CD4-positive, alpha-beta memory T cell (primary cell): ENCODE measurements at regions of chr2 and their contacts with region 1.

Region 1: DNA sequence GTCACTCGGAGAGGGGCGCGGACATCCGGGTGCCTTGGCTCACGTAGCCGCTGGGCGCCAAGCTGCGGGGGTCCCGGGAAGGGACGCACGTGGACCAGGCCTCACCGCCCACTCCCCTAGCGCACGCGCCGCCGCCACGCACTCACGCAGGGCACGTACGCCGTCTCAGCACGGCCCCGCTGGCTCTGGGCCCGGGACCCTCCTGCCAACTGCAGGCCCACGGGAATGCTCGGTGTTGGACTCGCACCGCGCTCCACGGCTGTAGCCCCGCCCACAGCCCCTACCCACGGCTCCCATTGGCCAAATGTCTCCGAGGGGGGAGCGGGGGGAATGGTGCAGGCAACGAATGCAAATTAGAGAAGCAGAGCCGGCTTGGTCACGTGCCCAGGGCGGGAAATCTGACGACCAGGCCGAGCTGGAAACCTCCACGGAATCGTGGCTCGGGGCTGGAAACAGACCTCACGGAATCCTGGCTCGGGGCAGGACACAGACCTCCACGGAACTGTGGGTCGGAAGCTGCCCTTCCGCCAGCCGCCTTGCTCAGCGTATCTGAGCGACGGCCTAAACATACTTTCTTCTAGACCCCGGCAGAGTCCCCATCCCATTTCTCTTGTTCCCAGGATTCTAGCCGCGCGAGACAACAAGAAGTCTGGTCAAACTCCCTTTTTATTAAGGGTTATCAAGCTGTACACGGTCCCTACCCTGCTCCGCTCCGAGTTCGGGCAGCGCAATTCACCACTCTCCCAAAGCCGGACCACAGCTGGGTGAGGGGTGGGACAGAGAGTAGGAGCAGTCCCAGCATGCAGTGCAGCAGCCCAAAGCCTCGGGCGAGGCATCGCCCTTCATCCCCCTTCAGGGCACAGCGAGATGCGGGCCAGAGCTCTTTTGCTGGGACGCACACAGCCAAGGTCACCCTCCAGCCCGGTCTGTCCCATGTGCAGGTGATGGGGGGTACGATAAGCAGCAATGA is at the start of gene ABCB6:
- DNase-seq: peak; percentile 81 to 93 (median 83)
- H3K4me3 ChIP-seq: peak within 1 kb of the TSS; percentile 49 to 68
- H3K4me3 Mint-ChIP-seq: peak within 1 kb of the TSS; percentile 82 to 93 (median 84)
- H3K27ac ChIP-seq: peak within 1 kb of the TSS; percentile 53
- H3K27ac Mint-ChIP-seq: peak within 1 kb of the TSS; percentile 74 to 96 (median 88)
- H3K4me1 ChIP-seq: peaks cover 24% of the 10 kb centered on the region
- H3K4me1 Mint-ChIP-seq: peaks cover 8 to 25% (median 19%) of the 10 kb centered on the region in 4 donors
- H3K27me3 ChIP-seq: no peaks in the 10 kb centered on the region
- H3K27me3 Mint-ChIP-seq: no peaks in the 10 kb centered on the region
- total RNA-seq, gene ABCB6: 10.7 to 11.1 TPM

Region 2: GRCh38 chr2:219171231-219171651 is 47.8 kb before region 1 on chr2:
- CTCF ChIA-PET with region 1: interaction called, 253 read pairs
- POLR2A ChIA-PET with region 1: interaction called, 424 read pairs
- intact Hi-C with region 1: loop called (anchors 2 kb)
- DNase-seq: peak; percentile 39 to 58 (median 49)
- H3K4me3 ChIP-seq: no peak overlapping the region
- H3K4me3 Mint-ChIP-seq: peak overlapping the region in 1 of 8 donors; percentile 25
- H3K27ac ChIP-seq: no peak overlapping the region
- H3K27ac Mint-ChIP-seq: peak overlapping the region; percentile 35 to 91 (median 75)
- H3K4me1 ChIP-seq: peaks cover 31% of the 10 kb centered on the region
- H3K4me1 Mint-ChIP-seq: peaks cover 15 to 46% (median 31%) of the 10 kb centered on the region in 4 donors
- H3K27me3 ChIP-seq: no peaks in the 10 kb centered on the region
- H3K27me3 Mint-ChIP-seq: no peaks in the 10 kb centered on the region

Region 3: GRCh38 chr2:219253753-219254590 is 35.0 kb after region 1 on chr2 and contains the start of gene TUBA4A:
- CTCF ChIA-PET with region 1: interaction called, 11 read pairs
- POLR2A ChIA-PET with region 1: interaction called, 684 read pairs
- intact Hi-C with region 1: loop called (anchors 1 kb)
- DNase-seq: peak; percentile 89 to 90 (median 90)
- H3K4me3 ChIP-seq: peak within 1 kb of the TSS; percentile 94 to 100
- H3K4me3 Mint-ChIP-seq: peak within 1 kb of the TSS; percentile 85 to 99 (median 94)
- H3K27ac ChIP-seq: peak within 1 kb of the TSS; percentile 87
- H3K27ac Mint-ChIP-seq: peak within 1 kb of the TSS; percentile 92 to 98 (median 97)
- H3K4me1 ChIP-seq: peaks cover 42% of the 10 kb centered on the region
- H3K4me1 Mint-ChIP-seq: peaks cover 34 to 60% (median 45%) of the 10 kb centered on the region in 4 donors
- H3K27me3 ChIP-seq: no peaks in the 10 kb centered on the region
- H3K27me3 Mint-ChIP-seq: no peaks in the 10 kb centered on the region
- total RNA-seq, gene TUBA4A: 242 to 259 TPM

Region 4: DNA sequence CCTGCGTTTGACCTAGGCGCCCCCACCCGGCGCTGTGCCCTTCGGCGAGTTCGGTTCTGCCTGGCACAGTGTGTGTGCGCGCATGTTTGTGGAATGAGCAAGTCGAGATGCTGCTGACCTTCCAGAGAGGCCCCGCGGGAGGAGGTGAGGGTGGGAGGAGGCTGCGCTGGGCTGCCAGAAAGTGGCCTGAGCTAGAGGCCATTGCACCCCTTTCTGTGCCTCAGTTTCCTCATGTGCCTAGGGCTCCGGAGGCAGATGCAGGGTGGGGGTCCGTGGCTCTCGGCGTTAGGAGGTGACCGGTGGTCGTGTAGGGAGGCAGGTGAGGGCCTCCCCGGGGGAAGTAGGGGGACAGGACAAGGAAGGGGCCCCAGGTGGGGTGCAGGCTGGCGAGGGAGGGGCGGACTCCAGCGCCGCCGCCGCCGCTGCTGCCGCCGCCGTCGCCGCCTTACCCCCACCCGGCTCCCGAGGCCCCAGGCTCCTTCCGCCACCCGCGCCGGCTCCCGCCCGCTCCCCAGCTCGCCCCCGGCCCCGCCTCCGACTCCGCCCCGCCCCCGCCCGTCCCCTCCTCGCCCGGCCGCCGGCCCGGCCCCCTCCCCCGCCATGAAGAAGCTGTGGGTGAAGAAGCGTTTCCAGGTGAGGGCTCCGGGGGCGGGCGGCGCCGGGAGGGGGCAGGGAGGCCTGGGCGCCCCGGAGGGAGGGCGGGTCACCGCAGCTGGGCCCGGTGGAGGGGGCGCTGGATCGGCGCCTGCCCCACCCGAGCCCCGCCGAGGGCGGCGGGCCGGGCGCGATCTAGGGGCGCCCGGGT is 222.6 kb after region 1 on chr2:
- CTCF ChIA-PET with region 1: no interaction called
- POLR2A ChIA-PET with region 1: no interaction called
- intact Hi-C with region 1: no loop called
- DNase-seq: peak; percentile 41 to 57 (median 44)
- H3K4me3 ChIP-seq: peak overlapping the region in 1 of 2 donors; percentile 47
- H3K4me3 Mint-ChIP-seq: peak overlapping the region; percentile 70 to 89 (median 78)
- H3K27ac ChIP-seq: no peak overlapping the region
- H3K27ac Mint-ChIP-seq: peak overlapping the region in 2 of 7 donors; percentile 17 to 75
- H3K4me1 ChIP-seq: peaks cover 7% of the 10 kb centered on the region
- H3K4me1 Mint-ChIP-seq: peaks cover 6 to 18% (median 14%) of the 10 kb centered on the region in 4 donors
- H3K27me3 ChIP-seq: no peaks in the 10 kb centered on the region
- H3K27me3 Mint-ChIP-seq: peaks cover 3 to 16% of the 10 kb centered on the region in 2 donors